Prostate gland (tissue), 2 donors: ENCODE measurements at regions of chr3 and their contacts with region 1.

Region 1: GRCh38 chr3:150528354-150528797 is 17.9 kb downstream of the SERP1 start:
- DNase-seq: no peak
- H3K4me3 ChIP-seq: no peak overlapping the region
- H3K27ac ChIP-seq: no peak overlapping the region
- H3K4me1 ChIP-seq: no peaks in the 10 kb centered on the region
- H3K27me3 ChIP-seq: no peaks in the 10 kb centered on the region
- CTCF ChIP-seq: peak in 1 of 4 experiments; percentile 28
- POLR2A ChIP-seq: no peak

Region 2: GRCh38 chr3:151146071-151146730 is 617.8 kb after region 1 on chr3:
- intact Hi-C with region 1: loop called (anchors 10 kb)
- DNase-seq: peak; percentile 67
- H3K4me3 ChIP-seq: no peak overlapping the region
- H3K27ac ChIP-seq: peak overlapping the region; percentile 60 to 65
- H3K4me1 ChIP-seq: peaks cover 9% of the 10 kb centered on the region
- H3K27me3 ChIP-seq: no peaks in the 10 kb centered on the region
- CTCF ChIP-seq: peak; percentile 60 to 88 (median 84)
- POLR2A ChIP-seq: no peak